ENCODE measurements at regions of chr2 and their contacts with region 1.

Region 1: GRCh38 chr2:204108330-204108751 is 171.8 kb downstream of the ICOS start:
- DNase-seq: peak; percentile 20
- H3K4me3 Mint-ChIP-seq: peak overlapping the region; percentile 64
- H3K27ac Mint-ChIP-seq: peak overlapping the region; percentile 89
- H3K4me1 Mint-ChIP-seq: peaks cover 75% of the 10 kb centered on the region
- H3K27me3 Mint-ChIP-seq: no peaks in the 10 kb centered on the region

Region 2: DNA sequence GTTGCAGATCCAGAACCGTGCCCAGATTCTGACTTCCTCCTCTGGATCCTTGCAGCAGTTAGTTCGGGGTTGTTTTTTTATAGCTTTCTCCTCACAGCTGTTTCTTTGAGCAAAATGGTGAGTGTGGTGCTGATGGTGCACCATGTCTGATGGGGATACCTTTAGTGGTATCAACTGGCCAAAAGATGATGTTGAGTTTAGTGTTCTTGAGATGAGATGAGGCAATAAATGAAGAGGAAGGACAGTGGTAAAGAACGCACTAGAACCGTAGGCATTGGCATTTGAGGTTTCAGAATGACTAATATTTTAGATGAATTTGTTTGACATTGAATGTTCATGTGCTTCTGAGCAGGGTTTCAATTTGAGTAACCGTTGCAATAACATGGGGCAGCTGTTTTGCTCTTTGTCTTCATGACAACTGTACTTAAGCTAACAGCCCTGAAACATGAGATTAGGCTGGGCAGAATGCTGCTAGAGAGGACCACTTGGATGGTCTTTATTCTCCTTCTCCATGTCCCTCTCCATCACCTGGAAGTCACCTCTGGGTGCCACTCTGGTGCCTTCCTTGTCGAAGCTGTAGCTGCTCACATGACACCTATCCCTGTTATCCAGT is 236.9 kb before region 1 on chr2:
- intact Hi-C with region 1: loop called (anchors 5 kb)
- DNase-seq: peak; percentile 60
- H3K4me3 Mint-ChIP-seq: peak overlapping the region; percentile 96
- H3K27ac Mint-ChIP-seq: peak overlapping the region; percentile 95
- H3K4me1 Mint-ChIP-seq: peaks cover 57% of the 10 kb centered on the region
- H3K27me3 Mint-ChIP-seq: no peaks in the 10 kb centered on the region

Region 3: GRCh38 chr2:203989521-203989920 is 118.8 kb before region 1 on chr2:
- intact Hi-C with region 1: loop called (anchors 2 kb)
- DNase-seq: no peak
- H3K4me3 Mint-ChIP-seq: no peak overlapping the region
- H3K27ac Mint-ChIP-seq: peak overlapping the region; percentile 16
- H3K4me1 Mint-ChIP-seq: peaks cover 33% of the 10 kb centered on the region
- H3K27me3 Mint-ChIP-seq: no peaks in the 10 kb centered on the region

Region 4: DNA sequence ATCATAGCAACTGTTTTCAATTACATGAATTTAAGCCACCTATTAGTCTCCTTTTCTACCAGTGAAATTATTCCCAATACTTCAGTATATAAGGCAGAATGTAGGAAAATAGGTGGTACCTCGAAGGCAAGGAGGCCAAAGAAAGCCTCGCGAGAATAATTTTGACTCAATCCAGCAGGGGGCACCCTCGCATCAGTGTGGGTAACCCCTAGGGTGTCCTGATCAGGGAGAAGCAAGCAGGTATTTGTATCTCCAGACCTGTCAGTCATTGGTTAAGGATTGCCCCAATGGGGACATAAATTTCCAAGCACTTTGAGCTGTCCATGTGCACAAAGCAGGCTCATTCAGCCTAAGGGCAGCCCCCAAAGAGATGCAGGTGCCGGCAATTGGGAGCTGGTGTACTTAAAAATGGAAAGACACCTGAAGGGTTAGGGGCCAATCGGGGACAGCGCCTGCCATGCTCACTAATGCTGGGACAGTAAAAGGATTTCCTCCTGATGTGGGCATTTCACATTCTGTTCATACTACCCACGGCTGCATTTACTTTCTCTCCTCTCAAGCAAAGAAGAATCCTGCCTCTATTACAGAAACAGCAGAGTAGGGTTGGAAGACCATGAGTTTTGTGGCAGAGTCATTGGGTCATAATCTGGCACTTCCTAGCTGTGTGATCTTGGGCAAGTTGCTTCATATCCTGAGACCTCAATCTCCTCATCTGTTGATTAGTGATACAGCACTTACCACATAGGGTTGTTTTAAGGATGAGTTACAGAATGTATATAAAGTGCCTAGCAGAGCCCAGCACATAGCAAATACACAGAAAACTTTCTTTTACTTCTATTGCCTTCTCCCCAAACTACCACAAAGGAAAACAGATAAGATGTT is 35.7 kb before region 1 on chr2:
- intact Hi-C with region 1: loop called (anchors 2 kb)
- DNase-seq: peak; percentile 48
- H3K4me3 Mint-ChIP-seq: no peak overlapping the region
- H3K27ac Mint-ChIP-seq: no peak overlapping the region
- H3K4me1 Mint-ChIP-seq: peaks cover 11% of the 10 kb centered on the region
- H3K27me3 Mint-ChIP-seq: peaks cover 19% of the 10 kb centered on the region

Region 5: DNA sequence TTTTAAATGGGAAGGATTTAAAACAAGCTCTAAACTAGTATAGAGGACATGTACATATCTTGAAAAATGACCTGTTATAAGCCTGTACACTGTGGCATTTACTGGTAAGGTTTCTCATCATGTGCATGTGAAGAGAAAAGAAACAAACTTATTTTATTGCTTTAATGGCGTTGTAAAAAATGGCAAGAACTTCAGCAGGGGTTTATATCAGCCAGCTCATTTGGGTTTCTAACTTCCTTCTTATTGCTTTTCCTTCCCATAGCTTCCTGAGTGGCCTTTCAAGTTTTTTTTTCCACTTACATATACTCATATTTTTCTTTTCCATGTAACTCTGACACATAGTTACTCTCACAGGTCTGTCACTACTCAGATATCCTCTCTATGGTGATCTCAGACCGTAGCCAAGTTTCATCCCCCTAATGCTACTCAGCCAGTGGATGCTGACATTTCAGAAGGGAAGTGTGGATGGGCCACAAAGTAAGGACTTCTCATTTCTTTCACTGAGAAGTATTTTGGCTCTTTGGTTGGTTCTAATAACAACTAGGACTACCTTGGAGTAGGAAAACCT is 635.1 kb after region 1 on chr2:
- intact Hi-C with region 1: loop called (anchors 5 kb)
- DNase-seq: no peak
- H3K4me3 Mint-ChIP-seq: no peak overlapping the region
- H3K27ac Mint-ChIP-seq: peak overlapping the region; percentile 58
- H3K4me1 Mint-ChIP-seq: peaks cover 10% of the 10 kb centered on the region
- H3K27me3 Mint-ChIP-seq: no peaks in the 10 kb centered on the region